Heart right ventricle (tissue), 16 donors: ENCODE measurements at regions of chr4 and their contacts with region 1.

Region 1: DNA sequence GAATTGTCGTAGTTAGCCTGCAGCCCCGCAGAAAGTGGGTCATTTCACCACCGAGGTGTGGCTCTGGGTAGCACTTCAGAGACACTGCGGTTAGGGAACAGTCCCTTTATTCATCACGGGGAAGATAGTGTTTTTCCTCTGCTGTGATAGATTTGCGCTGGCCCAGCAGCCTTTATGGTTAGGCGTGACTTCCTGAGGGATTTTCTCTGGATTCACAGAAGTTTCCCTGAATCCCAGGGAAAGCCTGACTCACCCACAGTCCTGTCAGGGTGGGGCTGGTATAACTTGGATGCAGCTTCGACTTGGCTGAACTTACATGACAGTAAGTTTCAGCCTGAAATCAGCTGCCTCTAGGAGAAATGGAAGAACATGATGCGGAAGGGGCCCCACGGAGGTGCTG is 196.3 kb upstream of the HHIP start:
- DNase-seq: peak in 1 of 2 donors; percentile 18
- ATAC-seq: peak; percentile 33 to 85 (median 52)
- H3K4me3 ChIP-seq: no peak overlapping the region
- H3K27ac ChIP-seq: no peak overlapping the region
- H3K4me1 ChIP-seq: peaks cover 0 to 5% (median 0%) of the 10 kb centered on the region in 9 donors
- H3K27me3 ChIP-seq: no peaks in the 10 kb centered on the region
- CTCF ChIP-seq: no peak

Region 2: DNA sequence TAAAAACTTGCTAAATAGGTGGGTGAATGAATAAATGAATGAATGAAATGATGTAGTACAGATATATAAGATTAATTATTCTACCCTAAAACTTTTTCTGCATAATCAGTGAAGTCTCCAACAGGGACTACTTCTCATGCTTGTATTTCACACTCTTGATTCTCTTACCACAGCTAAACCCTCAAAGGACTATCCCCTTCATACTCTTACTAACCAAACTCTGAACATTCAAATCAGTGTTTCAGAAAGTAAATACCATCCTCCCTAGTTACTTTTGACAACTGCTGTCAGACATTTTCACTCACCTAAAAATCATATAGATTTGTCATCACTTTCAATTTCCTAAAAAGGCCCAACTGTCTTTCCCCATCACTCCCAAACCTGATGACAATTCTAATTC is 37.9 kb before region 1 on chr4:
- intact Hi-C with region 1: loop called in 1 of 10 experiments (anchors 2 kb)
- DNase-seq: no peak
- ATAC-seq: no peak
- H3K4me3 ChIP-seq: no peak overlapping the region
- H3K27ac ChIP-seq: no peak overlapping the region
- H3K4me1 ChIP-seq: no peaks in the 10 kb centered on the region
- H3K27me3 ChIP-seq: no peaks in the 10 kb centered on the region
- CTCF ChIP-seq: no peak

Region 3: GRCh38 chr4:145061318-145061920 is 611.8 kb after region 1 on chr4:
- intact Hi-C with region 1: no loop called
- DNase-seq: no peak
- ATAC-seq: peak in 1 of 8 donors; percentile 51
- H3K4me3 ChIP-seq: no peak overlapping the region
- H3K27ac ChIP-seq: no peak overlapping the region
- H3K4me1 ChIP-seq: peaks cover 0 to 13% (median 0%) of the 10 kb centered on the region in 9 donors
- H3K27me3 ChIP-seq: no peaks in the 10 kb centered on the region
- CTCF ChIP-seq: peak; percentile 20 to 67 (median 56)